Transverse colon (tissue), 4 donors: ENCODE measurements at regions of chr6 and their contacts with region 1.

Region 1: DNA sequence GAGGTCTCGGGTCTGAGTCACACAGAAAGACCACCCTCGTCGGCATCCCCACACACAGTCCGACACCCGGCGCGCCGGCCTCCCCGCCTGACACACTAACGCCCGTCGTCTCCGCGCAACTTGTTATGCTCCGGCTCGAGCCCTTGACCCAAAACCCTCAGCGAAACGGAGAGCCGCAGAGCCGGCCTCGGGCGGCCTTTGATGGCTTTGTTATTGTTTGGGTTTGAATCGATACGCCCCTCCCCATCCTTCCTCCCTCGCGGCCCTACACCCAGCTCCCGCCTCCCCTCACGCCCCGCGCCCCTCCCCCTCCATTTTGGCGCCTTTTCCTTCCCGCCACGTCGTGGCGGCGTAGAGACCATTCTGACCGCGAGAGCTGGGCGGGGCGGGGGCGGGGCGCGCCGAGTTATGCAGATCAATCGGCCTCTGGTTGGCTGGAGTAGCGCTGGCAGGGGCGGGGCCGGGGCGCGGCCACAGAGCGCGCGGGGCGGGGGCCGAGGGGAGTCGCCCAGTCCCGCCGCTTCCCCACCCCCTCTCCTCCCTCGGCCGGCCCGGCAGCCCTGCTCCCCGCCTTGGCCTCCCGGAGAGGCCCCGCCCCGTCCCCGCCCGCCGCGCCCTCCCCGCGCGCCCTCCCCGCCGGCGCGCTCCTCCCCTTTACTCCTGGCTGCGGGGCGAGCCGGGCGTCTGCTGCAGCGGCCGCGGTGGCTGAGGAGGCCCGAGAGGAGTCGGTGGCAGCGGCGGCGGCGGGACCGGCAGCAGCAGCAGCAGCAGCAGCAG is at the start of gene PIM1:
- DNase-seq: peak; percentile 99
- H3K4me3 ChIP-seq: peak within 1 kb of the TSS; percentile 78 to 92 (median 88)
- H3K27ac ChIP-seq: peak within 1 kb of the TSS; percentile 96 to 98 (median 96)
- H3K4me1 ChIP-seq: peaks cover 13 to 44% (median 21%) of the 10 kb centered on the region in 4 donors
- H3K27me3 ChIP-seq: no peaks in the 10 kb centered on the region
- CTCF ChIP-seq: peak in 1 of 5 experiments; percentile 6
- EP300 ChIP-seq: no peak
- POLR2A ChIP-seq: peak; percentile 60
- total RNA-seq, gene PIM1: 6.8 to 102 (median 24.0) TPM

Region 2: GRCh38 chr6:37102279-37103168 is 67.2 kb before region 1 on chr6:
- in situ Hi-C with region 1: no loop called
- intact Hi-C with region 1: loop called (anchors 2 kb)
- DNase-seq: peak; percentile 88
- H3K4me3 ChIP-seq: peak overlapping the region in 3 of 4 donors; percentile 29 to 45 (median 38)
- H3K27ac ChIP-seq: peak overlapping the region; percentile 86 to 90 (median 88)
- H3K4me1 ChIP-seq: peaks cover 10 to 37% (median 28%) of the 10 kb centered on the region in 4 donors
- H3K27me3 ChIP-seq: no peaks in the 10 kb centered on the region
- CTCF ChIP-seq: no peak
- EP300 ChIP-seq: peak; percentile 80
- POLR2A ChIP-seq: peak; percentile 25

Region 3: GRCh38 chr6:37134606-37135191 is 35.0 kb before region 1 on chr6:
- in situ Hi-C with region 1: no loop called
- intact Hi-C with region 1: loop called (anchors 5 kb)
- DNase-seq: peak; percentile 74
- H3K4me3 ChIP-seq: no peak overlapping the region
- H3K27ac ChIP-seq: peak overlapping the region; percentile 82 to 88 (median 88)
- H3K4me1 ChIP-seq: peaks cover 31 to 73% (median 50%) of the 10 kb centered on the region in 4 donors
- H3K27me3 ChIP-seq: no peaks in the 10 kb centered on the region
- CTCF ChIP-seq: no peak
- EP300 ChIP-seq: no peak
- POLR2A ChIP-seq: no peak